ENCODE measurements at regions of chr6 and their contacts with region 1.

Region 1: GRCh38 chr6:131116749-131117360 is 18.4 kb upstream of the AKAP7 start:
- H3K4me3 ChIP-seq: no peak overlapping the region
- H3K27ac ChIP-seq: no peak overlapping the region
- H3K4me1 ChIP-seq: no peaks in the 10 kb centered on the region
- CTCF ChIP-seq: no peak

Region 2: DNA sequence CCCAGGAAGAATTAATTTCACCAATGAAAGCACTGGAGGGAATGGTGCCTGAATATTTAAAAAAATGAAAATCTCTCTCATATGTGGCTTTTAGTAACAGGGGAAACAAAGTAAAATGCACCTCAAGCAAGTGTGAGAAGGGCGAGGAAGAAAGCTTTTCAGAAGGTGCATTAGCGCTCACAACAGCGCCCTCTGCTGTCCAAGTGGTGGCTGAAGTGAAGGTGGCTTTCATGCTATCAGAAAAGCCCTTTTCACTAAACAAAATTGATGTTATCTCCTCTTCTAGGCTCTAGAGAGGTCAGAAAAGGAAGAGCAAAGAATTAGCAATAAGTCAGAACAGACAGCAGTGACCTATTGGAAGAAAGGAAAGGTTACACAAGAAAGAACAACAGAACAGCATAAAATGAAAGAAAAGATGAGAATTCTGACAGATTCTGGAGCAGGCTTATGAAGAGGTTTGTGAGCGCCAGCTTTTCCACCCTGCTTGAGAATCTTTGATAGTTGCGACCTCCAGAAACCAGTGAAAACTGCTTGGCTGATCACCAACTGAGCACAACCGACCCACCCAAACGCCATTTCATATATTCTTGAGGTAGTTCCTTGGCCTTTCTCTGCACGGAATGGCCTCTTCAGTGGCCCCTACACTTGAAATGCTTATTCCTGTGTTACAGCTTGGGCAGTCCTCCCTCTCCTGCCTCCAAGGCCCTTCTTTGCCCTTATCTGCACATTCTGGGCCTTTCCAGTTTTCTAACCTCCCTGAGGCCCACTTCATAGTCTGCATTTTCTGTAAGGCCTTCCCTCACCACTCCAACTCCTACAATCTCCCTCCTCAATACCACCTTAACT is 244.4 kb before region 1 on chr6:
- CTCF ChIA-PET with region 1: interaction called, 11 read pairs
- POLR2A ChIA-PET with region 1: no interaction called
- H3K4me3 ChIP-seq: no peak overlapping the region
- H3K27ac ChIP-seq: no peak overlapping the region
- H3K4me1 ChIP-seq: no peaks in the 10 kb centered on the region
- CTCF ChIP-seq: peak; percentile 50

Region 3: DNA sequence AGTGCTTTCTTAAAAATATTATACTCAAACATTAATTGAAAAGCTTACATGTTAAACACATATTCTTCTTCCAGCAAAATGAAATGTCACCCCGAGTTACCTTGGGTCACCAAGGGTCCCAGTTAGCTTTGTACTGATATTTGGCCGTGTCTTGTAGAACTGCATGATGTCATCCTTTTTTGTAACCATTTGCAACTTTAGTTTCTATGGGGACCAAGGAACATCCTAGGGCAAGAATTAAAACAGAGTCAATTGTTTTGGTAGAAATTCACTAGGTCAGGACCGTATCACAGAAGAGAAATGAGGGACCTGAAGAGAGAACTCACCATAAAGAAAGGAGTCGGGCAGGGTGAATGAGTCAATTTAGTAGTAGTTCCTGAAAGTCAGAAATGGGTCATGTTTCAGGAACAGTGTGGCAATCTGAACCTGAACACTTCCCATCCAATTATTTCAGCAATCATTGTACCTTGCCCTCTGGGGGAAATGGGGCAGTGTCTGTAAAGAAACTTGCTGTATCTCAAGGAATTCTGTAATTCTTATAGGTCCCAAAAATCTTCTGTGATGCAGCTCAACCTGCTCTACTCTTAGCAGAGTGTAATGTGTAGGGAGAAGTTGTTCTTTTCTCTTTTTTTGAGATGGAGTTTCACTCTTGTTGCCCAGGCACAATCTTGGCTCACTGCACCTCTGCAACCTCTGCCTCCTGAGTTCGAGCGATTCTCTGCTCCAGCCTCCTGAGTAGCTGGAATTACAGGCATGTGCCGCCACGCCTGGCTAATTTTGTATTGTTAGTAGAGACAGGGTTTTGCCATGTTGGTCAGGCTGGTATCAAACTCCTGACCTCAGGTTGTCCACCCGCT is 13.1 kb after region 1 on chr6:
- CTCF ChIA-PET with region 1: interaction called, 11 read pairs
- POLR2A ChIA-PET with region 1: interaction called, 3 read pairs
- H3K4me3 ChIP-seq: no peak overlapping the region
- H3K27ac ChIP-seq: no peak overlapping the region
- H3K4me1 ChIP-seq: no peaks in the 10 kb centered on the region; the same call in 1 of the 2 replicates
- CTCF ChIP-seq: no peak

Region 4: GRCh38 chr6:132354512-132355167 is 1237.8 kb after region 1 on chr6:
- CTCF ChIA-PET with region 1: no interaction called
- POLR2A ChIA-PET with region 1: no interaction called
- H3K4me3 ChIP-seq: no peak overlapping the region
- H3K27ac ChIP-seq: no peak overlapping the region
- H3K4me1 ChIP-seq: no peaks in the 10 kb centered on the region
- CTCF ChIP-seq: no peak